Endothelial cell of umbilical vein (primary cell): ENCODE measurements at regions of chr4 and their contacts with region 1.

Region 1: DNA sequence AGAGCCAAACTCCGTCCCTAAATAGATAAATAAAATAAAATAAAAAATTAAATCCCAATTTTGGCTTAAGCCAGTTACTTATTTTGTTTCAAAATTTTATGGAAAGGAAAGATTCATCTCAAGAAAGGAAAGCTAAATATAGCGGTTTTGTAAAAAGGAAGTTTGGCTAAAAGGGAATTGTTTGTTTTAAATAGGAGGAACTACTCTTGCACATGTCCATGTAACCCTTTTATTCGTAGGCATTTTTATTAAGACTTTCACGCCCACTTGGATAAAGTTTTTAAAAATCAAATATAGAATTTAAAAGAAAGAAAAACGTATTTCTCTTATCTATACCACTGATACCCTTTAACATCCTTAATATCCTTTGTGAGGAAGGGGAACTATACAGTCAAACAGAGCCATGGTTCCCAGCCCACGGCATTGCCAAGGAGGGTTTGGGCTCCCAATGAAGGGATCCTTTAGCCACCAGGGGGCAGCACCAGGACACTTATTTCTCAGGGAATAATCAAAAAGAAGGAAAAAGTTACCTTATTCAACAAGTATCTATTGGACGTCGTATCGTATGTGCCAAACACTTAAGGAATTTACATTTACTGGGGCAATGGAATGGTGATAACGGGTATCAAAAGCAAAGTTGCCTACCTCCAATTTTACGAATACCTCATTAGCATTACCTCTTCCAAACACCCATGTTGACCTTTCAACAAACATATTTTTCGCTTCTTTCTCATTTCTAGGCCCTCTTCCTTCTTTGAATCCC is 27.7 kb downstream of the CDKN2AIP start:
- DNase-seq: peak; percentile 76
- H3K4me3 ChIP-seq: no peak overlapping the region
- H3K27ac ChIP-seq: no peak overlapping the region
- H3K4me1 ChIP-seq: no peaks in the 10 kb centered on the region
- H3K27me3 ChIP-seq: no peaks in the 10 kb centered on the region
- CTCF ChIP-seq: peak; percentile 70 to 80
- POLR2A ChIP-seq: no peak

Region 2: GRCh38 chr4:183335369-183335940 is 136.7 kb before region 1 on chr4:
- CTCF ChIA-PET with region 1: no interaction called
- POLR2A ChIA-PET with region 1: no interaction called
- dilution Hi-C with region 1: no loop called
- intact Hi-C with region 1: no loop called
- DNase-seq: peak; percentile 91
- H3K4me3 ChIP-seq: no peak overlapping the region
- H3K27ac ChIP-seq: peak overlapping the region; percentile 96
- H3K4me1 ChIP-seq: peaks cover 27% of the 10 kb centered on the region
- H3K27me3 ChIP-seq: no peaks in the 10 kb centered on the region
- CTCF ChIP-seq: no peak
- POLR2A ChIP-seq: peak; percentile 63

Region 3: GRCh38 chr4:183563874-183564273 is 91.7 kb after region 1 on chr4:
- CTCF ChIA-PET with region 1: no interaction called
- POLR2A ChIA-PET with region 1: no interaction called
- dilution Hi-C with region 1: no loop called
- intact Hi-C with region 1: loop called (anchors 5 kb)
- DNase-seq: no peak
- H3K4me3 ChIP-seq: no peak overlapping the region
- H3K27ac ChIP-seq: no peak overlapping the region
- H3K4me1 ChIP-seq: no peaks in the 10 kb centered on the region
- H3K27me3 ChIP-seq: peaks cover 2 to 4% of the 10 kb centered on the region in 2 experiments
- CTCF ChIP-seq: no peak
- POLR2A ChIP-seq: no peak

Region 4: GRCh38 chr4:183659029-183659871 is 187.1 kb after region 1 on chr4 and contains the starts of genes RWDD4 and TRAPPC11:
- CTCF ChIA-PET with region 1: interaction called, 4 read pairs
- POLR2A ChIA-PET with region 1: no interaction called
- dilution Hi-C with region 1: no loop called
- intact Hi-C with region 1: loop called (anchors 1 kb)
- DNase-seq: peak; percentile 99
- H3K4me3 ChIP-seq: peak within 1 kb of the TSS; percentile 51 to 69 (median 64)
- H3K27ac ChIP-seq: peak within 1 kb of the TSS; percentile 58
- H3K4me1 ChIP-seq: peaks cover 13% of the 10 kb centered on the region
- H3K27me3 ChIP-seq: no peaks in the 10 kb centered on the region
- CTCF ChIP-seq: peak in 1 of 2 donors; percentile 13
- POLR2A ChIP-seq: peak; percentile 53
- total RNA-seq, gene RWDD4: 16.6 and 16.8 TPM in 2 replicates
- total RNA-seq, gene TRAPPC11: 29.7 and 32.1 TPM in 2 replicates

Region 5: GRCh38 chr4:183722731-183723560 is 250.8 kb after region 1 on chr4:
- CTCF ChIA-PET with region 1: interaction called, 3 read pairs
- POLR2A ChIA-PET with region 1: no interaction called
- dilution Hi-C with region 1: no loop called
- intact Hi-C with region 1: loop called (anchors 1 kb)
- DNase-seq: peak; percentile 33
- H3K4me3 ChIP-seq: peak overlapping the region; percentile 34 to 44 (median 35)
- H3K27ac ChIP-seq: no peak overlapping the region
- H3K4me1 ChIP-seq: peaks cover 2% of the 10 kb centered on the region
- H3K27me3 ChIP-seq: no peaks in the 10 kb centered on the region
- CTCF ChIP-seq: no peak
- POLR2A ChIP-seq: no peak

Region 6: GRCh38 chr4:184168406-184169019 is 696.4 kb after region 1 on chr4:
- CTCF ChIA-PET with region 1: interaction called, 3 read pairs
- POLR2A ChIA-PET with region 1: no interaction called
- dilution Hi-C with region 1: no loop called
- intact Hi-C with region 1: loop called (anchors 1 kb)
- DNase-seq: peak; percentile 53
- H3K4me3 ChIP-seq: no peak overlapping the region
- H3K27ac ChIP-seq: no peak overlapping the region
- H3K4me1 ChIP-seq: no peaks in the 10 kb centered on the region
- H3K27me3 ChIP-seq: peaks cover 0 to 3% of the 10 kb centered on the region in 2 experiments
- CTCF ChIP-seq: peak; percentile 90 to 99
- POLR2A ChIP-seq: no peak